ENCODE measurements at regions of chr6 and their contacts with region 1.

Region 1: DNA sequence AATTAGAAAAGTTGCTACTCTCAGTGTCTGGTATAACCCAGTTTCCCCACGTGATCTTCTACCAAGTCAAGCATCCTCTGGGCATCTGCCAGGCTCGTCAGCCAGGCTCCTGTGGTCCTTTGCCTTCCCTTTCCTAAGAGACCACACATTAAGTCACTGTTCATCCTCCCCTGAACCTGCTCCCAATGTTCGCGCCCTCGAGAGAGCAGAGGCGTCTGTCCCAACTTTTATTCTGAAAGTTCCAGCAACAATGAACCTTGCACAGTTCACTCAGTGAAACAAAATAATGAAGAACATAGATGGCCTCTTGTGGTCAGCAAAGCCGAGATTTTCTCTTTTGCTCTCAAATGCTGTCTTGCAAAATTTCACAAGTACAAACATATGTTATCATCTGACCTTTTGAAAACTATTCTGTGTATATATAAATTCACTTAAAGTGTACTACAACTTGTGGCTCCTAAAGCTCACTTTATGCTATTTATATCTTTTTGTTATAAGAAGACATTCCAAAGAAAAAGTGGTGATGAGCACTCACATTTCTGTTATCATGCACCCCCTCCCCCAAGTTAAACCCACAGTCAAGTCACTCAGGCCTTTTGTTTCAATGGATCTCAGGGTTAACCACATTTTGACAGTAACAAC is 39.2 kb upstream of the NHSL1 start:
- DNase-seq: peak; percentile 83
- ATAC-seq: peak; percentile 31
- H3K4me3 ChIP-seq: peak overlapping the region; percentile 10; the same call in 1 of the 2 replicates
- H3K27ac ChIP-seq: peak overlapping the region; percentile 96
- H3K4me1 ChIP-seq: peaks cover 26% of the 10 kb centered on the region
- H3K27me3 ChIP-seq: no peaks in the 10 kb centered on the region
- CTCF ChIP-seq: no peak
- POLR2A ChIP-seq: no peak
- RAD21 ChIP-seq: no peak

Region 2: GRCh38 chr6:138572167-138572865 is 33.8 kb after region 1 on chr6:
- CTCF ChIA-PET with region 1: interaction called, 4 read pairs
- POLR2A ChIA-PET with region 1: no interaction called
- dilution Hi-C with region 1: no loop called
- in situ Hi-C with region 1: no loop called
- intact Hi-C with region 1: loop called (anchors 1 kb)
- DNase-seq: peak; percentile 91
- ATAC-seq: peak; percentile 91
- H3K4me3 ChIP-seq: peak overlapping the region; percentile 53
- H3K27ac ChIP-seq: peak overlapping the region; percentile 52
- H3K4me1 ChIP-seq: peaks cover 3% of the 10 kb centered on the region
- H3K27me3 ChIP-seq: no peaks in the 10 kb centered on the region
- CTCF ChIP-seq: no peak
- POLR2A ChIP-seq: peak; percentile 33; the same call in 1 of the 2 replicates
- RAD21 ChIP-seq: no peak

Region 3: DNA sequence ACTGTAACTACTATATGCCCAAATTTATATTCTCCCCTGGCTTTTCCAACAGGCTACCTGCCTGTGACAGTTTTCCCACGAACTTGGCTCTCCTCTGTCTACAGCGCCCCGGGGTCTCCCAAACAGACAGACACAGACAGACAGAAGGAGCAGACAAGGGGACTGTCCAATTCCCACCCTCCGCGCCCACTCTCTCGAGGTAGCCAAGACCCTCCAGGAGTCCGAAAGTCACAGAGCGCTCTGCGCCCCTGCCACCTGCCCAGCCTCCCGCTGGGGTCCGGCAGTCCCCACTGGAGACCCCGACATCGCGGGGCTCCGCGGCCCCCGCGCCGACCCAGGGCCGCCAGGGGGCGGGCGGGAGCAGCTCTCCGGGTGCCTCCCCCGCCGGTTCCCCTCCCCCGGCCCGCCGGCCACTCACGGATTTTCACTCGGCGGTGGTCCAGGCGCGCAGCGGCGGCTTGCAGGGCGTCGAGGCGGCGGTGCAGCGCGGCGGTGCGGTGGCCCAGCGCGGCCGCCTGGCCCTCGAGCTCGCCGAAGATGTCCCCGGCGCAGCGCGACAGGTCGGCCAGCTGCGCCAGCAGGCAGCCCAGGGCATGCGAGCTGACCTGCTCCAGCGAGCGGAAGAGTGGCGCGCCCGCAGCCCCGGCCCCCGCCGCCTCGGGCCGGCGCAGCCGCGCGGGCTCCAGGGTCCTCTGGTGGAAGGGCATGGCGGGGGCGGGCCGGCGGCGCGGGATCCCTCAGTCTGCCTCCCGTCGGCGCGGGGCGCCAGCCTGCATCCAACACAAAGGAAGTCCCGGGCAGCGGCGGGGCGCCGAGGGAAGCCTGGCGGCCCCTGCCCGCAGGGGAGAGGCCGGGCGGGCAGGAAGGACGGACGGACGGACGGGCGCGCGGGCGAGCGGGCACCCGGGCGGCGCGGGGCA is 153.8 kb after region 1 on chr6:
- CTCF ChIA-PET with region 1: no interaction called
- POLR2A ChIA-PET with region 1: interaction called, 13 read pairs
- dilution Hi-C with region 1: no loop called
- in situ Hi-C with region 1: no loop called
- intact Hi-C with region 1: no loop called
- DNase-seq: peak; percentile 50
- ATAC-seq: peak; percentile 79
- H3K4me3 ChIP-seq: peak overlapping the region; percentile 88
- H3K27ac ChIP-seq: peak overlapping the region; percentile 65
- H3K4me1 ChIP-seq: no peaks in the 10 kb centered on the region
- H3K27me3 ChIP-seq: no peaks in the 10 kb centered on the region
- CTCF ChIP-seq: peak; percentile 75
- POLR2A ChIP-seq: no peak
- RAD21 ChIP-seq: peak; percentile 40

Region 4: DNA sequence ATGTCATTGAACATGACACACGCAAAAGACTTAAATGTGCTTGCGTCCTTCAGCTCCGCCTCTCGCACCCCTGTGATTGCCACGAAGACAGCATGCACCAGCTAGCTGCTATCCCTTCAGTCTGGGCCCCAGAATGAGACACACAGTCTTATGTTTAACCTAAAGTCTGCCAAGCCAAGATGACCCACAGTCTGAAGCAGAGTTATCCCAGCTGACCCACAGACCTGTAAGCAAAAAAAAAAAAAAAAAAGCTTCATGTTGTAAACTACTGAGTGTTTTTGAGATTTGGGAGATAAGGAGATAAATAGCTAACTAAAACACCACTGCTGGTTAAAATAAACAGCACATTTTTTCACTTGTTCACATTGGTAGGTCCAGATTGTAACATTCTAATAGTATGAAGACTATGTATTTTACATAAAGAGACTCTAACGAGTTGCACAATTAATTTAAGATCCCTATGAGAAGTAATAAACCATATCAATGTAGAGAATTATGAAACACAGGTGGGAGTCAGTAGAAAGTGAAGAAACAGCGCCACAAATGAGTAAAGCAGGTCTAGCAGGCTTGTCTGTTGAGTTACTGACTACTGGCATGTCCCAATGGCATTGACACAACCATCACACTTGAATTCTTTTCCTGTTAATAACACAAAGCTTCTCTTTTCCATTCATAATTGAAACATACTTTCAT is 187.7 kb after region 1 on chr6:
- CTCF ChIA-PET with region 1: no interaction called
- POLR2A ChIA-PET with region 1: interaction called, 11 read pairs
- dilution Hi-C with region 1: no loop called
- in situ Hi-C with region 1: no loop called
- intact Hi-C with region 1: no loop called
- DNase-seq: peak; percentile 15
- ATAC-seq: peak; percentile 70
- H3K4me3 ChIP-seq: no peak overlapping the region
- H3K27ac ChIP-seq: no peak overlapping the region
- H3K4me1 ChIP-seq: peaks cover 4% of the 10 kb centered on the region
- H3K27me3 ChIP-seq: no peaks in the 10 kb centered on the region
- CTCF ChIP-seq: no peak
- POLR2A ChIP-seq: no peak
- RAD21 ChIP-seq: no peak

Measured in IMR-90 (cell line).